ENCODE measurements at regions of chr13 and their contacts with region 1.

Region 1: GRCh38 chr13:95676762-95677563 is at the start of gene DNAJC3:
- DNase-seq: peak; percentile 98
- H3K4me3 Mint-ChIP-seq: peak within 1 kb of the TSS; percentile 94
- H3K27ac Mint-ChIP-seq: peak within 1 kb of the TSS; percentile 82
- H3K4me1 Mint-ChIP-seq: peaks cover 56% of the 10 kb centered on the region
- H3K27me3 Mint-ChIP-seq: no peaks in the 10 kb centered on the region
- total RNA-seq, gene DNAJC3: 19.2 to 20.1 TPM

Region 2: DNA sequence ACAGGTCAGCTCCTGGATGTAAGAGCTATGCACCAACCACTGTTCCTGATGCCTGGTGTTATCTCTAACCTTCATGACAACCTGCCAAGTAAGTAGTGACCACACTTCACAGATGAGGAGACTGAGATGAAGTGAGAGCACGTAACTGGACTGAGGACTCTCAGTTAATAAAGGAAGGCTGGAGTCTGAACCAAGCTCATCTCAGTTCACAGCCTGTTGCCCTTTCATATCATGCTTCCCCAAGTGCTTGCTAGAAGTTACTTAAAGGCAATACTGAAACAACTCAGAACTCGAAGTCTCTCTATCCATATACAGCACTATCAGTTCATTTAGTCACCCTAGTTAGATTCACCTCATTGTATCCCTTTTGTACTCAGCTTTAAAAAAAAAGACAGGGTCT is 495.4 kb before region 1 on chr13:
- CTCF ChIA-PET with region 1: no interaction called
- POLR2A ChIA-PET with region 1: no interaction called
- intact Hi-C with region 1: loop called (anchors 5 kb)
- DNase-seq: no peak
- H3K4me3 Mint-ChIP-seq: no peak overlapping the region
- H3K27ac Mint-ChIP-seq: peak overlapping the region; percentile 57
- H3K4me1 Mint-ChIP-seq: peaks cover 64% of the 10 kb centered on the region
- H3K27me3 Mint-ChIP-seq: no peaks in the 10 kb centered on the region

Region 3: GRCh38 chr13:95391785-95392184 is 285.2 kb before region 1 on chr13:
- CTCF ChIA-PET with region 1: no interaction called
- POLR2A ChIA-PET with region 1: no interaction called
- intact Hi-C with region 1: no loop called
- DNase-seq: no peak
- H3K4me3 Mint-ChIP-seq: no peak overlapping the region
- H3K27ac Mint-ChIP-seq: no peak overlapping the region
- H3K4me1 Mint-ChIP-seq: no peaks in the 10 kb centered on the region
- H3K27me3 Mint-ChIP-seq: peaks cover 15% of the 10 kb centered on the region

Region 4: GRCh38 chr13:95536632-95537241 is 140.2 kb before region 1 on chr13:
- CTCF ChIA-PET with region 1: interaction called, 3 read pairs
- POLR2A ChIA-PET with region 1: no interaction called
- intact Hi-C with region 1: loop called (anchors 5 kb)
- DNase-seq: no peak
- H3K4me3 Mint-ChIP-seq: no peak overlapping the region
- H3K27ac Mint-ChIP-seq: no peak overlapping the region
- H3K4me1 Mint-ChIP-seq: peaks cover 7% of the 10 kb centered on the region
- H3K27me3 Mint-ChIP-seq: peaks cover 18% of the 10 kb centered on the region

Region 5: GRCh38 chr13:95636853-95637252 is 40.1 kb before region 1 on chr13:
- CTCF ChIA-PET with region 1: interaction called, 3 read pairs
- POLR2A ChIA-PET with region 1: no interaction called
- intact Hi-C with region 1: loop called (anchors 2 kb)
- DNase-seq: no peak
- H3K4me3 Mint-ChIP-seq: no peak overlapping the region
- H3K27ac Mint-ChIP-seq: peak overlapping the region; percentile 56
- H3K4me1 Mint-ChIP-seq: peaks cover 10% of the 10 kb centered on the region
- H3K27me3 Mint-ChIP-seq: peaks cover 30% of the 10 kb centered on the region

Region 6: DNA sequence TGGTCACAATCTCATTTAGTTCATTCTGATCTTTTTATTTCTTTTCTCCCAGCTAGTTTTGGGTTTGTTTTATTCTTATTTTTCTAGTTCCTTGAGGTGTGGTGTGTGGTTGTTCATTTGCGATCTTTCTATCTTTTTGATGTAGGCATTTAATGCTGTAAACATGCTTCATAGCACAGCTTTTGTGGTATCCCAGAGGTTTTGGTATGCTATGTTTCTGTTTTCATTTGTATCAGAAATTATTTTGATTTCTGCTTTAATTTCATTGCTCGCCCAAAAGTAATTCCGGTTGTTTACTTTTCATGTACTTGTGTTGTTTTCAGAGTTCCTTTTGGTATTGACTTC is 12.6 kb after region 1 on chr13:
- CTCF ChIA-PET with region 1: no interaction called
- POLR2A ChIA-PET with region 1: no interaction called
- intact Hi-C with region 1: loop called (anchors 1 kb)
- DNase-seq: no peak
- H3K4me3 Mint-ChIP-seq: no peak overlapping the region
- H3K27ac Mint-ChIP-seq: peak overlapping the region; percentile 57
- H3K4me1 Mint-ChIP-seq: peaks cover 49% of the 10 kb centered on the region
- H3K27me3 Mint-ChIP-seq: no peaks in the 10 kb centered on the region

Region 7: DNA sequence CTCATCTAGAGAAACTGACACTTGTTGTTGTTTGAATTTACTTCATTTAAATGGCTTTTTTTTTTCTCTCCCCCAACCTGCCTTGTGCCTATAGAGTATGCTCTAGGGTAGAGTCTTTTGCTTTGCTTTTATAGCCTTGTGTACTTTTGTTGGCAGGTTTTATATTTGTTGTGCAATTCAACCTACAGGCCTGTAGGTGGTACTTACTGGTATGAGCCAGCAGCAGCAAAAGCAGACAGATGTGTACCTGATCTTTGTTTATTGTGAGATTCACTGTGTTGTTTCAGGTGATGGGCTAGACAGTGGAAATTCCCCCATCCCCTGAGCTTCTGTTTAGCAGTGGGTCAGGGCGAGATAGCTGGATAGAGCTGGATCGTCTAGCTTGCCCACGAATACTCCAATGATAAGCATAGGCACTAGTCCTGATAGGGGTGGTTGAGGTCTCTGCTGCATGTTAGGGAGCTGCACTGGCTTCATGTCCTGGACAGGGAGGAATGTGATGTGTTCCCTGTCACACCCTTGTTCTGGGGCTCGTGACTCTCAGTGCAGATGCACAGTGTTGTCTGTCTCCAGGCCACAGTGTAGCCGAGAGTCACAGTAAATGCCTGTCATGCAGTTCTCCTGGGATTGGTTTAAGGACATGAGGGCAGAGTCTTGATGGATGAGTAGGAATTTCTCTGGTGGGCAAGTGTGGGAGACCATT is 21.2 kb after region 1 on chr13:
- CTCF ChIA-PET with region 1: no interaction called
- POLR2A ChIA-PET with region 1: no interaction called
- intact Hi-C with region 1: loop called (anchors 2 kb)
- DNase-seq: no peak
- H3K4me3 Mint-ChIP-seq: no peak overlapping the region
- H3K27ac Mint-ChIP-seq: no peak overlapping the region
- H3K4me1 Mint-ChIP-seq: peaks cover 50% of the 10 kb centered on the region
- H3K27me3 Mint-ChIP-seq: no peaks in the 10 kb centered on the region

Region 8: DNA sequence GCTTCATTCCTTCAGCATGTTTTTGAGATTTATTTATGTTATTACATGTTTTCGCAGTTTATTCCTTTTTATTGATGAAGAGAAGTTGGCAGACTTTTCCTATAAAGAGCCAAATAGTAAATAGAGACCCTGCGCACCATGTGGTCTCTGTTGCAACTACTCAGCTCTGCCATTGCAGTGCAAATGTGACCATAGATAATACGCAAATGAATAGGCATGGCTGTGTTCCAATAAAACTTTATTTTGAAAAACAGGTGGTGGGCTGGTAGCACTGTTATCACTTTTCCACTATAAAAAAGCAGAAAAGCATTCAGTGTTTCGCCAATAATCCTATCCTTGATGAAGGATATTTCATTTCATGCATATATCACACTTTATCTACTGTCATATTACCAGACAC is 94.9 kb after region 1 on chr13:
- CTCF ChIA-PET with region 1: no interaction called
- POLR2A ChIA-PET with region 1: no interaction called
- intact Hi-C with region 1: no loop called
- DNase-seq: no peak
- H3K4me3 Mint-ChIP-seq: no peak overlapping the region
- H3K27ac Mint-ChIP-seq: no peak overlapping the region
- H3K4me1 Mint-ChIP-seq: peaks cover 5% of the 10 kb centered on the region
- H3K27me3 Mint-ChIP-seq: no peaks in the 10 kb centered on the region

Region 9: DNA sequence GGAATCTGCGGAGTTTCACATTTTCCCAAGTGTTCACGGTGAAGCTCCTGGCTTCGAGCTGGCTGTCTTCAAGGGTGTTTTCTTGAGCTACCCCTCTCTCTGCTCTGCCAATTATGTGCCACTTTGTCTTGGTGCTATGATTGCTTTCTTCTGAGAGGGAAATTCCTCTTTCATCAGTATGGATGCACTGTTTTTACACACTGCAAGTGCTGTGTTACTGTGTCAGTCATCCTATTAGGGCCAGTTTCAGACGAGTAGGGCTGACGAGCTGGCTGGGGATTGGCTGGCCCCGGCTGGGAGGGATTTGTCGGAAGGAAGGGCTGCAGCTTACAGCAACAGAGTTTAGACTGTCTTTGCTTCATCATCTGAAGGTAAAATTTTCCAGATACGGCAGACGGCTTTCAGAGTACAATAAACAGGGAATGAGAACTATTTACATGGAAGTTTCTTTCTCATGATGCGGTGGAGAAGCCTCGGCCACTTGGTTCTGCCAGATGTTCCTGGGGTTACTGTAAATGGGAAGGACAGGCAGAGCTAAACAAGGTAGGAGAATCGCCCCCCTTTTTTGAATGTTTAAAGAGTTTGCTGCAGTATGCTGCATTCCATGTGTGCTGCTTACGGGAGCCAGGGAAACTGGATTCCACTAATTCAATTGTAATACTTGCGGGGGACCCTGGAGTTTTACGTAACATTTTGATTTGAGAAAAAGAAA is 1545.2 kb after region 1 on chr13 and contains the start of gene MBNL2:
- CTCF ChIA-PET with region 1: no interaction called
- POLR2A ChIA-PET with region 1: no interaction called
- intact Hi-C with region 1: loop called (anchors 10 kb)
- DNase-seq: peak; percentile 93
- H3K4me3 Mint-ChIP-seq: peak within 1 kb of the TSS; percentile 81
- H3K27ac Mint-ChIP-seq: peak within 1 kb of the TSS; percentile 91
- H3K4me1 Mint-ChIP-seq: peaks cover 31% of the 10 kb centered on the region
- H3K27me3 Mint-ChIP-seq: no peaks in the 10 kb centered on the region
- total RNA-seq, gene MBNL2: 23.4 to 24.6 TPM